Brain microvascular endothelial cell (primary cell): ENCODE measurements at regions of chr1 and their contacts with region 1.

Region 1: DNA sequence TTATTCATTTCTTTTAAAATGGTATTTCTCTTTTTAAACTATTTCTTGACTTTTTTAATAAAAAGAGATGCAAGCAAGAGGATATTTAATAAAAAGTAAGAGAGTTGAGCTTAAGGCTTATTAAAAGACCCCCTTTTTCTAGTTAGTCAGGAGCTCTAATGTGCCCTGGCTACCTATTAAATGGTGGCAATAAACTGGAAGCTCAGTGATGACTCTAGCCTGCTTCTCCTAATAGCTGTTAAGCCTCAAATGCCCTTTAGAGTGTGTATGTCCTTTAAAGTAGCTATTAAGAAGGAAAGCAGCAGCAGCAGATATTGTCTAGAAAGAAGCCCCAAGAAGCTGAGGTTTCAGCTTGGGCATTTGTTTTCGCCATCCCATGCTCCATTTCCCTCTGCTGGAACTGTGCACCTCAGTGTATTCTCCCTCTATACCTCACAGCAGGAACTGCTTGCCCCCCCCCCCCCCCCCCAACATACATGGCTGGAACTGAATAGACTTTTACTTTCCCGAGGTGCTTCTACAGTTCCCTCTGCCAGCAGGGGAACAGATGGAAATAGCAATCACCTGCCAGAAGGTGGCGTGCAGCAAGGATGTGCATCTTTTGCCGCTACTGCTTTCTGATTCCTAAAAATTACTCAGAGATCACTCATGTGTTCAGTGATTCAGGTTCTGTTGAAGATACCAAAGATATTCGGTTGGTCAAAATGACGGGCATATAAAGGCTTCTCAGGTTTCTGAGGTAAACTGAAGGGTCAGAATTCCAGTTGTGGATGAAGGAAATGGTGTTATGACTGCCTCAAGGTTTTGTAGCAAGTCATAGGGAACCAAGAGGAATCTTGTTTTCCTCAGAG is 2.5 kb downstream of the RGS4 start:
- DNase-seq: peak; percentile 88
- H3K4me3 ChIP-seq: peak overlapping the region; percentile 62
- H3K27ac ChIP-seq: peak overlapping the region; percentile 79
- H3K27me3 ChIP-seq: no peaks in the 10 kb centered on the region
- CTCF ChIP-seq: peak; percentile 87

Region 2: GRCh38 chr1:162878000-162878596 is 193.5 kb before region 1 on chr1:
- in situ Hi-C with region 1: loop called (anchors 25 kb)
- DNase-seq: peak; percentile 90
- H3K4me3 ChIP-seq: no peak overlapping the region
- H3K27ac ChIP-seq: peak overlapping the region; percentile 40
- H3K27me3 ChIP-seq: no peaks in the 10 kb centered on the region
- CTCF ChIP-seq: peak; percentile 86

Region 3: GRCh38 chr1:163213626-163214025 is 142.0 kb after region 1 on chr1:
- in situ Hi-C with region 1: no loop called
- DNase-seq: no peak
- H3K4me3 ChIP-seq: no peak overlapping the region
- H3K27ac ChIP-seq: no peak overlapping the region
- H3K27me3 ChIP-seq: no peaks in the 10 kb centered on the region
- CTCF ChIP-seq: no peak